ENCODE measurements at regions of chr6 and their contacts with region 1.

Region 1: GRCh38 chr6:106997390-106998158 is 23.0 kb upstream of the CD24 start:
- DNase-seq: peak; percentile 66
- H3K4me3 ChIP-seq: no peak overlapping the region; a peak in 1 of 4 replicates
- H3K27ac ChIP-seq: no peak overlapping the region
- H3K4me1 ChIP-seq: no peaks in the 10 kb centered on the region
- H3K27me3 ChIP-seq: no peaks in the 10 kb centered on the region
- CTCF ChIP-seq: peak; percentile 87
- EP300 ChIP-seq: no peak
- RAD21 ChIP-seq: peak; percentile 73

Region 2: DNA sequence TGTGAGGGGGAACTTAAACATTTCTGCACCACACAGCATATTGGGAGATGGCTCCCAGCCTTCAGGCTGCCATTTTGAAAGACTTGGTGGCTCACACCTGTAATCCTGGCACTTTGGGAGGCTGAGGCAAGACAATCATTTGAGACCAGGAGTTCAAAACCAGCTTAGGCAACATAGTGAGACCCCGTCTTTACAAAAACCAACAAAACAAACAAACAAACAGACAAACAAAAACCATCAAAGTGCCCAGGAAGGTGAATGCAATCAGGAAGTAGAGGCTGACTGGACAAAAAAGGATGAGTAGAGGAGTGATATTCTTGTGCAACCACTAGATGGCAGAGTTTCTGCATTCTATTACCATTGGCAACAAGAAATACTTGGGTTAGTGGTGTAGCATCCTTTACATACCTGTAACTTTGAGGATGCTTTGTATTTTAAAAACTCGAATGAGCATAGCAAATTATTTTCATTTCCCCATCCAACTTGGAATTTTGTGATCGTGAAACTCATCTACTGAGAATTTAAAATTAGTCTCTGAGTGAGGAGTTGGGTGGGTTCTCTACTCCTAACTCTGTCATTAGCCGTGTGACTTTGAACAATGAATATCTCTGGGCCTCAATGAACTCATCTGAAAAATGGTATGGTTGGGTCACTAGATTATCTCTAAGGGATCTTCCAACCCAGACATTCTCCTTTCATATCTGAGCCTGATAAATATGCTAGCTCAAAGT is 552.6 kb before region 1 on chr6:
- CTCF ChIA-PET with region 1: interaction called, 23 read pairs
- POLR2A ChIA-PET with region 1: no interaction called
- DNase-seq: peak; percentile 67
- H3K4me3 ChIP-seq: no peak overlapping the region
- H3K27ac ChIP-seq: no peak overlapping the region
- H3K4me1 ChIP-seq: no peaks in the 10 kb centered on the region
- H3K27me3 ChIP-seq: peaks cover 20% of the 10 kb centered on the region
- CTCF ChIP-seq: peak; percentile 82
- EP300 ChIP-seq: no peak
- RAD21 ChIP-seq: peak; percentile 81

Region 3: DNA sequence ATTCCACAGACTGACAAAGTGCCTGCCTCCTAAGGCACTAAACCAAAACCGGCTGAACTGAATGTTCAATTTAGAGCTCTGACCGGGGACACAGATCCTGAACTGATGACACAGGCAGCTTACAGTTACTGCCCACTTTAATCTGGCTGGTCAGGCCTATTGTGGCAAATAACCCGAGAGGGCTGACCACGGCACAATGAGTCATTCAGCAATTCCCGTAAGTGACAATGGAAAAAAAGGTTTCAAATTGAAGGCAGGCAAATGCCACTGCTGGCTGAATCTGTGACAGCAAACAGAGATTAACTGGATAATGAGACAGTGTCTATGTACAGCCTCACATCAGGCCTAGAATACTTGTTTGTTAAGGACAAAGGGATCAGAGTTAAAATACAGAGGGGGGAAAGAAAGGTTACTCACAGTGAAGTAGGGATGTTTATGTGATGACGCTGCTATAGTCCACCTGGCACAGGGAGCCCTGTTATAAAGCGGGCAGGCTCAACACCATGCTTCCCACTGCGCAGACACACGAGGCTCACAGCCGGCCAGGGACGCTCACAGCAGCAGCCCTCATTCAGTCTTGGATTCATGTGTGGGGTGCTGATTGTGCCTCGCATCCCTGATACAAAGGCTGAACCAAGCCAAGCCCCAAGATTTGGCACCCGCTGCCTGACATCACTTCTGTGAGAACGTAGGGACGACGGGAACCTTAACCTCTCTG is 422.7 kb before region 1 on chr6:
- CTCF ChIA-PET with region 1: interaction called, 10 read pairs
- POLR2A ChIA-PET with region 1: no interaction called
- DNase-seq: no peak
- H3K4me3 ChIP-seq: no peak overlapping the region
- H3K27ac ChIP-seq: peak overlapping the region; percentile 14 to 35; a peak in 2 of 4 replicates
- H3K4me1 ChIP-seq: no peaks in the 10 kb centered on the region
- H3K27me3 ChIP-seq: no peaks in the 10 kb centered on the region
- CTCF ChIP-seq: no peak
- EP300 ChIP-seq: peak in 1 of 2 experiments; percentile 51; a peak in 1 of 4 replicates
- RAD21 ChIP-seq: no peak

Region 4: DNA sequence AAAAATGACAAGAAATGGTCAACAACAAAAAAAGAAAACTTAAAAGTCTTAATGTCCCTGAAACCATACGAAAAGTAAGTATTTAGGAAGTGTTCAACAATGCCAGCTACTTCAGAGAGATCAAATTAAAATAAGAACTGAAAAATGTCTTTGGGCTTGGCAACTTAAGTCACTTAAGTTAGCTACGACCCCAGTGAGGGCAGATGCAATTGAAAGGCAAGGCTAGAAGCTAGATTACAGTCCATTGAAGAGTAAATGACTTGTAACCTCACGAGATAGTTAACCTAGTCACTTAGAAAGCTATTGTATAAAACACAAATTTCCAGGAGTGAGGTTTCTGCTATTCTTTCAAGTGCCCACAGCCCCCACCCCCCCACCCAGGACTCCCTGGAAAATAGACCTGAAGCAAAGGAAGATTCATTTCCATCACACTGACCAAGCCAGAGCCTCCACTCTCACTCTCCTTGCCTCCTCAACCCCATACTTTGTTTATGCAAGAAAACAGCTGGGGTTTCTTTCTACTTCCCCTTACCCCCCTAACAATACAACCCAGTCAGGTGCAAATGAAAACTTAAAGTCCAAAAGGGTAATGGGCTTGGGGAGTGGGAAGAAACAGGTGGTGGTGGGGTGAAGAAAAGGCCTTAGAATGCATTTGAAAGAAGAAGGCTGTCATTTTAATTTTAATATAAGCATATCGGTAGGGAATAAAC is 382.8 kb before region 1 on chr6:
- CTCF ChIA-PET with region 1: interaction called, 11 read pairs
- POLR2A ChIA-PET with region 1: no interaction called
- DNase-seq: no peak
- H3K4me3 ChIP-seq: no peak overlapping the region
- H3K27ac ChIP-seq: no peak overlapping the region
- H3K4me1 ChIP-seq: no peaks in the 10 kb centered on the region
- H3K27me3 ChIP-seq: no peaks in the 10 kb centered on the region
- CTCF ChIP-seq: no peak
- EP300 ChIP-seq: no peak
- RAD21 ChIP-seq: no peak

Region 5: DNA sequence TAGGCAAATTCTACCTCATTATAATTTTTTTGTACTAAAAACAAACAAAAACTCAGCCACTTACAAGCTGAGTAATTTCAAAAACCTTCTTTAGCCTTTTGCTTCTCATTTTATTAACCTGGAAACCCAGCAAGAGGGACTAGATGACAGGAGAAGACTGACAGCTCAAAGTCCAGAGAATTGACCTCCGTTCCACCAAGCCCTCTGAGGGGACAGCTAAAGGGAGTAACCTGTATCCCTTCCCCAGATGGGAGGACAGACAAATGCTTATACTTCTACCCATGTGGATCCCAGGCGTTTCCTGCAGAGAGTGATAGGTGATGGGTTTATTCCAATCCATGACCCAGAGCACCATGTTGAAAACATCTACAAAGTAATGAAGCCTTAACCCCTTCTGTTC is 11.9 kb after region 1 on chr6:
- CTCF ChIA-PET with region 1: interaction called, 32 read pairs
- POLR2A ChIA-PET with region 1: no interaction called
- DNase-seq: no peak
- H3K4me3 ChIP-seq: no peak overlapping the region
- H3K27ac ChIP-seq: no peak overlapping the region
- H3K4me1 ChIP-seq: no peaks in the 10 kb centered on the region
- H3K27me3 ChIP-seq: no peaks in the 10 kb centered on the region; the same call in 1 of the 2 replicates
- CTCF ChIP-seq: no peak
- EP300 ChIP-seq: no peak
- RAD21 ChIP-seq: no peak

Region 6: DNA sequence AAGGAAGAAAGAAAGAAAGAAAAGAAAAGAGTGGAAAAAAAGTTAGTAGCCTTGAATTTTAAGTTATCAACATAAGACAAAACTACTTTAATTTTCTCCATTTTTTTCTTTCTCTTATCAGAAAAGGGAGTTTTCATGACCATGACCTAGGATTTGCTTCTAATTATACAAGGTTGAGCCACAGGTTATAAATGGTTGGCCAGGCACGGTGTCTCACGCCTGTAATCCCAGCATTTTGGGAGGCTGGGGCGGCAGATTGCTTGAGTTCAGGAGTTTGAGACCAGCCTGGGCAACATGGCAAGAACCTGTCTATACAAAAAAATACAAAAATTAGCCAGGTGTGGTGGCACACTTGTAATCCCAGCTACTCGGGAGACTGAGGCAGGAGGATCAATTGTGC is 22.7 kb after region 1 on chr6:
- CTCF ChIA-PET with region 1: interaction called, 13 read pairs
- POLR2A ChIA-PET with region 1: no interaction called
- DNase-seq: no peak
- H3K4me3 ChIP-seq: no peak overlapping the region
- H3K27ac ChIP-seq: no peak overlapping the region
- H3K4me1 ChIP-seq: no peaks in the 10 kb centered on the region
- H3K27me3 ChIP-seq: no peaks in the 10 kb centered on the region
- CTCF ChIP-seq: no peak
- EP300 ChIP-seq: no peak
- RAD21 ChIP-seq: no peak